ENCODE measurements at regions of chr17 and their contacts with region 1.

Region 1: GRCh38 chr17:50169121-50169764 is 3.4 kb downstream of the SGCA start:
- DNase-seq: peak; percentile 41 to 71
- ATAC-seq: peak in 2 of 4 donors; percentile 10
- H3K4me3 ChIP-seq: peak overlapping the region; percentile 71
- H3K27ac ChIP-seq: peak overlapping the region; percentile 80
- H3K4me1 ChIP-seq: peaks cover 64% of the 10 kb centered on the region
- H3K27me3 ChIP-seq: no peaks in the 10 kb centered on the region
- CTCF ChIP-seq: peak; percentile 33

Region 2: DNA sequence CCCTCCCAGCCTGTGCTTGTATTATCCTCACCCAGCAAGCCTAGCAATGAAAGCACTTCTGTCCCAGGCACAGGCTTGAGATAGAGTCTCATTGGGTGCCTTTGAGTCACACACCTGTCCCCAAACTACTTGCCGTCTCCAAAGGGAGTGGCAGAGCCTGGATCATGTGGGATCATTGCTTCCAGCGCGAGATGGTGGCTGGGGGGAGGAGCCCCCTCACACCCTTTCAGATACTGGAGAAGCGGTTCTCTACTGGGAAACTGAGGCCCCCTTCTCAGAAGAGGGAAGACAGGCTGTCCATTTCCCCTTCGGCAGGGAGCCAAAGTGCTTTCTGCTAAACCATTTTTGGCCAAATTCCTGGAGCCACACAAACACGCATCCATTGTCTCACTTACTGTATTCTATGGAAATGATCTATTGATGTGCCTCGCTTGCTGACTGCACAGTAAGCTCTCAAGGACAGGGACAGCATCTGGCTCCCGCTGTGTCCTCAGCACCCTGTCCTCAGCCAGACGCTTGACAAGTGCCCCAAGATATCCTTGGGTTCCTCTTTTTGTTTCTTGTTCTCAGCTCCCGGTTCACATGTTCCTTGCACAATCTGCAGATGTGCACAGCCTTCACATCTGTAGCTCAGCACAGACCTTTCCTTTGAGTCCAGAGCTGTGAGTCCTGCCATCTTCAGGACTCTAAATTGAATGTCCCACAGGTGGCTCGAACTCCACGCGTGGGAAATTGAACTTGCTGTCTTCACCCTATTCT is 148.2 kb before region 1 on chr17:
- intact Hi-C with region 1: no loop called
- DNase-seq: no peak
- ATAC-seq: no peak
- H3K4me3 ChIP-seq: no peak overlapping the region
- H3K27ac ChIP-seq: no peak overlapping the region
- H3K4me1 ChIP-seq: no peaks in the 10 kb centered on the region
- H3K27me3 ChIP-seq: no peaks in the 10 kb centered on the region
- CTCF ChIP-seq: no peak

Region 3: GRCh38 chr17:50129728-50130558 is 39.3 kb before region 1 on chr17 and contains the start of gene SAMD14:
- intact Hi-C with region 1: loop called (anchors 5 kb)
- DNase-seq: peak in 1 of 2 donors; percentile 76
- ATAC-seq: peak; percentile 26 to 58 (median 46)
- H3K4me3 ChIP-seq: peak within 1 kb of the TSS; percentile 69
- H3K27ac ChIP-seq: peak within 1 kb of the TSS; percentile 82
- H3K4me1 ChIP-seq: peaks cover 34% of the 10 kb centered on the region
- H3K27me3 ChIP-seq: no peaks in the 10 kb centered on the region
- CTCF ChIP-seq: no peak
- total RNA-seq, gene SAMD14: 0.55 to 2.7 (median 1.3) TPM

Measured in psoas muscle (tissue), 8 donors.